ENCODE measurements at regions of chr12 and their contacts with region 1.

Region 1: GRCh38 chr12:121223292-121224285 is 13.7 kb downstream of the P2RX4 start:
- DNase-seq: peak in 4 of 5 donors; percentile 9 to 68 (median 52)
- H3K4me3 ChIP-seq: no peak overlapping the region
- H3K4me3 Mint-ChIP-seq: peak overlapping the region in 6 of 7 donors; percentile 63 to 86 (median 71)
- H3K27ac ChIP-seq: no peak overlapping the region
- H3K27ac Mint-ChIP-seq: peak overlapping the region; percentile 64 to 94 (median 90)
- H3K4me1 ChIP-seq: peaks cover 46% of the 10 kb centered on the region
- H3K4me1 Mint-ChIP-seq: peaks cover 24 to 36% (median 25%) of the 10 kb centered on the region in 3 donors
- H3K27me3 ChIP-seq: no peaks in the 10 kb centered on the region
- H3K27me3 Mint-ChIP-seq: no peaks in the 10 kb centered on the region

Region 2: GRCh38 chr12:121240484-121241101 is 17.0 kb after region 1 on chr12:
- CTCF ChIA-PET with region 1: interaction called, 12 read pairs
- POLR2A ChIA-PET with region 1: interaction called, 14 read pairs
- DNase-seq: peak; percentile 84 to 100 (median 95)
- H3K4me3 ChIP-seq: peak overlapping the region; percentile 56
- H3K4me3 Mint-ChIP-seq: peak overlapping the region; percentile 67 to 96 (median 88)
- H3K27ac ChIP-seq: peak overlapping the region; percentile 49
- H3K27ac Mint-ChIP-seq: peak overlapping the region; percentile 98 to 100 (median 99)
- H3K4me1 ChIP-seq: peaks cover 37% of the 10 kb centered on the region
- H3K4me1 Mint-ChIP-seq: peaks cover 31 to 52% (median 35%) of the 10 kb centered on the region in 3 donors
- H3K27me3 ChIP-seq: no peaks in the 10 kb centered on the region
- H3K27me3 Mint-ChIP-seq: no peaks in the 10 kb centered on the region